CD4-positive, alpha-beta memory T cell (primary cell): ENCODE measurements at regions of chr11 and their contacts with region 1.

Region 1: GRCh38 chr11:6757373-6757967 is 14.3 kb downstream of the OR2AG2 start:
- DNase-seq: peak; percentile 55 to 62 (median 60)
- H3K4me3 ChIP-seq: no peak overlapping the region
- H3K4me3 Mint-ChIP-seq: no peak overlapping the region
- H3K27ac ChIP-seq: no peak overlapping the region
- H3K27ac Mint-ChIP-seq: no peak overlapping the region
- H3K4me1 ChIP-seq: peaks cover 6% of the 10 kb centered on the region
- H3K4me1 Mint-ChIP-seq: peaks cover 0 to 11% (median 8%) of the 10 kb centered on the region in 4 donors
- H3K27me3 ChIP-seq: no peaks in the 10 kb centered on the region
- H3K27me3 Mint-ChIP-seq: peaks cover 2 to 4% of the 10 kb centered on the region in 2 donors

Region 2: GRCh38 chr11:5818245-5818886 is 939.1 kb before region 1 on chr11:
- CTCF ChIA-PET with region 1: no interaction called
- POLR2A ChIA-PET with region 1: no interaction called
- intact Hi-C with region 1: no loop called
- DNase-seq: peak in 2 of 5 donors; percentile 6 to 7
- H3K4me3 ChIP-seq: peak overlapping the region in 1 of 2 donors; percentile 15
- H3K4me3 Mint-ChIP-seq: peak overlapping the region; percentile 79 to 93 (median 86)
- H3K27ac ChIP-seq: no peak overlapping the region
- H3K27ac Mint-ChIP-seq: peak overlapping the region in 6 of 7 donors; percentile 8 to 87 (median 80)
- H3K4me1 ChIP-seq: peaks cover 10% of the 10 kb centered on the region
- H3K4me1 Mint-ChIP-seq: peaks cover 7 to 15% (median 10%) of the 10 kb centered on the region in 4 donors
- H3K27me3 ChIP-seq: no peaks in the 10 kb centered on the region
- H3K27me3 Mint-ChIP-seq: peaks cover 0 to 1% of the 10 kb centered on the region in 2 donors

Region 3: GRCh38 chr11:6443269-6444003 is 314.0 kb before region 1 on chr11:
- CTCF ChIA-PET with region 1: interaction called, 4 read pairs
- POLR2A ChIA-PET with region 1: no interaction called
- intact Hi-C with region 1: loop called (anchors 2 kb)
- DNase-seq: peak; percentile 53 to 58 (median 57)
- H3K4me3 ChIP-seq: no peak overlapping the region
- H3K4me3 Mint-ChIP-seq: no peak overlapping the region
- H3K27ac ChIP-seq: no peak overlapping the region
- H3K27ac Mint-ChIP-seq: no peak overlapping the region
- H3K4me1 ChIP-seq: peaks cover 18% of the 10 kb centered on the region
- H3K4me1 Mint-ChIP-seq: no peaks in the 10 kb centered on the region
- H3K27me3 ChIP-seq: no peaks in the 10 kb centered on the region
- H3K27me3 Mint-ChIP-seq: no peaks in the 10 kb centered on the region

Region 4: DNA sequence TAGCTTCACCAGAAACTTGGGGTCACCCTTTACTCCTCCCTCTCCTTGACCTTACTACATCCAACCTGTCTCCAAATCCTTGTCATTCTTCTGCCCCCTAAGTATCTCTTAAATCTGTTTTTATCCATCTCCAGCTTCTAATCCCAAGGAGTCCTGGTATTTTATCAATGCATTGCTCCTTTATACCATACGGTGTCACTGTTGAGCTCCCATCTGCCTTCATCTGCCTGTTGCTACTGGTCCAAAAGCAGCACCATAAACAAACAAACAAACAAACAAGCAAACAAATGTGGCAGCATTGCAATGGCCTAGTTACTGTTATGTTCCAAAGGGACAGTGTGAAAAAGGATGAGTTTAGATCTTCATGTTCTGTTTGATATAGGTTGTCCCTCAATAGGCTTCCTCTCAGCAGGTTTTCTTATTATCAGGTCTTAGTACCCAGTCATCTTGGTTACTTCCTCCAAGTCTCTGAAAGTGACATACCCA is 226.2 kb before region 1 on chr11:
- CTCF ChIA-PET with region 1: interaction called, 18 read pairs
- POLR2A ChIA-PET with region 1: interaction called, 3 read pairs
- intact Hi-C with region 1: loop called (anchors 1 kb)
- DNase-seq: peak; percentile 46 to 54 (median 50)
- H3K4me3 ChIP-seq: no peak overlapping the region
- H3K4me3 Mint-ChIP-seq: no peak overlapping the region
- H3K27ac ChIP-seq: no peak overlapping the region
- H3K27ac Mint-ChIP-seq: no peak overlapping the region
- H3K4me1 ChIP-seq: peaks cover 7% of the 10 kb centered on the region
- H3K4me1 Mint-ChIP-seq: peaks cover 6 to 14% (median 8%) of the 10 kb centered on the region in 4 donors
- H3K27me3 ChIP-seq: no peaks in the 10 kb centered on the region
- H3K27me3 Mint-ChIP-seq: no peaks in the 10 kb centered on the region

Region 5: GRCh38 chr11:6619004-6619745 is 138.3 kb before region 1 on chr11 and contains the start of gene TPP1:
- CTCF ChIA-PET with region 1: interaction called, 19 read pairs
- POLR2A ChIA-PET with region 1: no interaction called
- intact Hi-C with region 1: no loop called
- DNase-seq: peak; percentile 88 to 94 (median 91)
- H3K4me3 ChIP-seq: peak within 1 kb of the TSS; percentile 68 to 86
- H3K4me3 Mint-ChIP-seq: no peak within 1 kb of the TSS
- H3K27ac ChIP-seq: peak within 1 kb of the TSS; percentile 90
- H3K27ac Mint-ChIP-seq: no peak within 1 kb of the TSS
- H3K4me1 ChIP-seq: peaks cover 29% of the 10 kb centered on the region
- H3K4me1 Mint-ChIP-seq: peaks cover 6 to 12% (median 9%) of the 10 kb centered on the region in 4 donors
- H3K27me3 ChIP-seq: no peaks in the 10 kb centered on the region
- H3K27me3 Mint-ChIP-seq: no peaks in the 10 kb centered on the region
- total RNA-seq, gene TPP1: 194 to 198 TPM

Region 6: DNA sequence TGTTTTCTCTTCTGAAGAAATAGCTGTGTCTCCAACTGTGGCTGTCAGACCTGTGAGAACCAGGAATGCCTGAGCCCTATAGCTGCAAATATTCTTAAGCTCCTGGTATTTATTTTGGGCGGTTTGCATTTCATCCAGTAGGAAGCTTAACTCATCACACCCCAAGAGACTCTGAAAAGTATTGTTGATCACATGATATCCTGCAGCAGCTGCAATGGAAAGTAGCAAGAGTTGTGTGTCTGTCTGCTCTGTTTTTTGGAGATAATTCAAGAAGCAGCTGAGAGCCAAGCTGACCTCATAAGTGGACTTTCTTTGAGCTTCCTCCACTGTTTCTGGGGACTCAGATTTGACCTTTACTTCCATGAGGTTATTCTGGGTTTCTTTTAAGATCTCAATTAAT is 37.9 kb before region 1 on chr11:
- CTCF ChIA-PET with region 1: interaction called, 80 read pairs
- POLR2A ChIA-PET with region 1: no interaction called
- intact Hi-C with region 1: no loop called
- DNase-seq: no peak
- H3K4me3 ChIP-seq: no peak overlapping the region
- H3K4me3 Mint-ChIP-seq: peak overlapping the region in 2 of 8 donors; percentile 27 to 31
- H3K27ac ChIP-seq: no peak overlapping the region
- H3K27ac Mint-ChIP-seq: peak overlapping the region; percentile 0 to 86 (median 59)
- H3K4me1 ChIP-seq: peaks cover 75% of the 10 kb centered on the region
- H3K4me1 Mint-ChIP-seq: peaks cover 56 to 91% (median 77%) of the 10 kb centered on the region in 4 donors
- H3K27me3 ChIP-seq: no peaks in the 10 kb centered on the region
- H3K27me3 Mint-ChIP-seq: no peaks in the 10 kb centered on the region

Region 7: DNA sequence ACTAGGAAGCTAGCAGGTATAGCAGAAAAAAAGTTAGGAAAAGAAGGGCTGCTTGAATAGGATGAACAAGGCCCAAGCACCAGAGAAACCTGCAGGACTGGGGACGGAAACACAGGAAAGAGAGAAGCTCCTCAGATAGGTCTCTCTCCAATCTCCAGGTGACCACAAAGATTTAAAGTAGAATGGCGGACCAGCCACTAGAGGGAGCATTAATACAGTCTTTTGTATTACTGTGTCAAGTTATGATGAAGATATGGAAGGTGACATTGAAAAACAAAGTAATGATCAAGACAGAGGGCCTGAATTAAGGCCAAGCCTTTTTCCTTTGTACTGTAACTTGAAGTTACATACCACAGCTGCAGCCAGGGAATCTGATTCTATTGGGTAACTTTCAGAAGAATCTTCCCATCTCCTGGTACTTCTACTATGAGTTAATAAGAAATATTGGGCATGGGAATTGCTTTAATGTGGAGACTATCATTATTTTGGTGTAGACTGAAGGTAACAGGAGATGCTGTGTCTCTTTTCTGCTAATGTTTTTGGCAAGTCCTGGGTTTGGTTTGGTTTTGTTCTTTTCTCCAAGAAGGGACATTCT is 19.5 kb before region 1 on chr11:
- CTCF ChIA-PET with region 1: interaction called, 730 read pairs
- POLR2A ChIA-PET with region 1: interaction called, 21 read pairs
- intact Hi-C with region 1: loop called (anchors 1 kb)
- DNase-seq: peak; percentile 73 to 82 (median 75)
- H3K4me3 ChIP-seq: no peak overlapping the region
- H3K4me3 Mint-ChIP-seq: peak overlapping the region; percentile 23 to 77 (median 38)
- H3K27ac ChIP-seq: peak overlapping the region; percentile 38
- H3K27ac Mint-ChIP-seq: peak overlapping the region; percentile 60 to 89 (median 75)
- H3K4me1 ChIP-seq: peaks cover 88% of the 10 kb centered on the region
- H3K4me1 Mint-ChIP-seq: peaks cover 75 to 91% (median 83%) of the 10 kb centered on the region in 4 donors
- H3K27me3 ChIP-seq: no peaks in the 10 kb centered on the region
- H3K27me3 Mint-ChIP-seq: no peaks in the 10 kb centered on the region

Region 8: DNA sequence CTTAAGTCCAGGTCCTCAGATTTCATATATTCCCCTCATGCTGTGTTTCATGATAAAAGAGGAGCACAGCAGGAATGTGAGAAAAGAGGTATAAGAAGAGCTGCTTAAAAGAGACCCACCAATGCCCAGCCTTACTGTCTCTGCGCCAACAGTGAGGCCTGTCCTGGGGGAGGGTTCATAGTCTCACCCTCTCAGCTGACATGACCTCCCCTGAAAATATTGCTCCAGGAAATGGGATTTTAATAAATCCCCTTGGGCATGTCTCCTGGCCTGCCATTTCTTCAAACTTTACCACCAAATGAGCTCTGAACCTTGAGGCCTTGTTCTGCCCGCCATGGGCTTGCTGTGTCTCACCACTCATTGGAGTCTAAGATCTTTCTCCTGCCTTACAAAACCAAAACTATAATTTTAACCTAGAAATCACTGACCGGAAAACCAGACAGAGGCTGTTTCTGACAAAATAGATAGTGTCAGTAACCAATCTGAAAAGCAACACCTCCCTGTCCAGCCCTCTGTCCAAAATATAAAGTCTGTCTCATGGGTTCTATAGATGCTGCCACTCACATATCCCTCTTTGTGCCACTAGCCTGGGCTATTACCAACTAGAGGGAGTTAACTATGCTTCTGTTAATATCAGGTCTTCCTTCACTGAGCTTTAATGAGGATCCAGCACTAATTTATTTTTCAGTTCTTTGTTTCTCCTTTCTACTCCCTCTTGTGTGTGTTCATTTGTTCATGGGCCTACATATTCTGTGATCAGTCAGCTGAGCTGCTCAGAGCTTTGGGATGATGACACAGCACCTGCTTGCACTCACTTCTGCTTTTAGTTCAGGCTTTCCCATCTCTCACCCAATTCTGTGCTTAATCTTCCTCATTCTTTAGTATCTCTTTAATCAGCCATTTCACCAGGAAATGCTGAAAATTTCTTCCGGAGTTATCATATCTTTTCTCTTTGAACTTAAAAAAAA is 14.7 kb after region 1 on chr11 and contains the start of gene OR2AG2:
- CTCF ChIA-PET with region 1: interaction called, 10 read pairs
- POLR2A ChIA-PET with region 1: no interaction called
- intact Hi-C with region 1: no loop called
- DNase-seq: no peak
- H3K4me3 ChIP-seq: no peak within 1 kb of the TSS
- H3K4me3 Mint-ChIP-seq: no peak within 1 kb of the TSS
- H3K27ac ChIP-seq: no peak within 1 kb of the TSS
- H3K27ac Mint-ChIP-seq: peak within 1 kb of the TSS in 2 of 7 donors; percentile 31 to 73
- H3K4me1 ChIP-seq: no peaks in the 10 kb centered on the region
- H3K4me1 Mint-ChIP-seq: no peaks in the 10 kb centered on the region
- H3K27me3 ChIP-seq: no peaks in the 10 kb centered on the region
- H3K27me3 Mint-ChIP-seq: peaks cover 0 to 5% of the 10 kb centered on the region in 2 donors
- total RNA-seq, gene OR2AG2: not detected